GM12878 (cell line): ENCODE measurements at regions of chr9 and their contacts with region 1.

Region 1: GRCh38 chr9:123742009-123742767 is 187.7 kb downstream of the DENND1A start:
- DNase-seq: no peak
- ATAC-seq: no peak
- H3K4me3 ChIP-seq: no peak overlapping the region
- H3K27ac ChIP-seq: no peak overlapping the region
- H3K4me1 ChIP-seq: peaks cover 4% of the 10 kb centered on the region; the same call in 1 of the 2 replicates
- H3K27me3 ChIP-seq: no peaks in the 10 kb centered on the region
- CTCF ChIP-seq: no peak
- EP300 ChIP-seq: no peak
- POLR2A ChIP-seq: no peak
- RAD21 ChIP-seq: no peak

Region 2: DNA sequence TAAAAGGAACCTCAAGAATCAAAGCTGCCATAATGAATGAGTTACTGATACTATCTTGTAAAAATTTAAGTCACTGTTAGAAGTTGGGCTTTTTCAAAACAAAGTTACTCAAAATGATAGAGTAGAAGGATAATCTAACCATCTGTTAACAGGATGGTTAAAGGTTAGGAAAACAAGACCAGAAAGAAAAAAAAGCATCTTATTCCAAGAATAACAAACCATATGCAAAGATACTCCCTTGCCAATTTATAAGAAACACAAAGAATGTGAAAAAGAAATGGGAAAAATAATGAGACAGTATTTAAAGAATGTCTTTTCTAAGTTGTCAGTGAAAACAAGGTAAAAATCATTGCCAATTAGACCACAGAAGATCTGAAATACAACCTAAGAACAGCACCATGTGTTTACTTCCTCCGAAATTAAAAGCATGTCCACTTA is 525.0 kb before region 1 on chr9:
- CTCF ChIA-PET with region 1: no interaction called
- POLR2A ChIA-PET with region 1: no interaction called
- RAD21 ChIA-PET with region 1: no interaction called
- SMC1A ChIA-PET with region 1: no interaction called
- in situ Hi-C with region 1: no loop called
- intact Hi-C with region 1: no loop called
- DNase-seq: no peak
- ATAC-seq: no peak
- H3K4me3 ChIP-seq: no peak overlapping the region
- H3K27ac ChIP-seq: no peak overlapping the region; the same call in 1 of the 2 replicates
- H3K4me1 ChIP-seq: peaks cover 10% of the 10 kb centered on the region; the same call in 1 of the 2 replicates
- H3K27me3 ChIP-seq: no peaks in the 10 kb centered on the region
- CTCF ChIP-seq: no peak
- EP300 ChIP-seq: no peak
- POLR2A ChIP-seq: no peak
- RAD21 ChIP-seq: no peak

Region 3: GRCh38 chr9:123724211-123724796 is 17.9 kb before region 1 on chr9:
- CTCF ChIA-PET with region 1: interaction called, 6 read pairs
- POLR2A ChIA-PET with region 1: interaction called, 6 read pairs
- RAD21 ChIA-PET with region 1: interaction called, 3 read pairs
- SMC1A ChIA-PET with region 1: interaction called, 36 read pairs
- in situ Hi-C with region 1: no loop called
- intact Hi-C with region 1: no loop called
- DNase-seq: no peak
- ATAC-seq: no peak; the same call in 2 of the 3 replicates
- H3K4me3 ChIP-seq: no peak overlapping the region
- H3K27ac ChIP-seq: no peak overlapping the region
- H3K4me1 ChIP-seq: no peaks in the 10 kb centered on the region
- H3K27me3 ChIP-seq: no peaks in the 10 kb centered on the region
- CTCF ChIP-seq: peak in 1 of 3 experiments; percentile 20; a peak in 2 of 6 replicates
- EP300 ChIP-seq: no peak
- POLR2A ChIP-seq: no peak
- RAD21 ChIP-seq: peak; percentile 49; the same call in 1 of the 2 replicates

Region 4: GRCh38 chr9:123757547-123757946 is 15.4 kb after region 1 on chr9:
- CTCF ChIA-PET with region 1: interaction called, 3 read pairs
- POLR2A ChIA-PET with region 1: interaction called, 4 read pairs
- RAD21 ChIA-PET with region 1: interaction called, 4 read pairs
- SMC1A ChIA-PET with region 1: interaction called, 92 read pairs
- in situ Hi-C with region 1: no loop called
- intact Hi-C with region 1: no loop called
- DNase-seq: no peak
- ATAC-seq: no peak
- H3K4me3 ChIP-seq: no peak overlapping the region
- H3K27ac ChIP-seq: no peak overlapping the region
- H3K4me1 ChIP-seq: peaks cover 17% of the 10 kb centered on the region
- H3K27me3 ChIP-seq: no peaks in the 10 kb centered on the region
- CTCF ChIP-seq: no peak
- EP300 ChIP-seq: no peak
- POLR2A ChIP-seq: no peak
- RAD21 ChIP-seq: no peak

Region 5: DNA sequence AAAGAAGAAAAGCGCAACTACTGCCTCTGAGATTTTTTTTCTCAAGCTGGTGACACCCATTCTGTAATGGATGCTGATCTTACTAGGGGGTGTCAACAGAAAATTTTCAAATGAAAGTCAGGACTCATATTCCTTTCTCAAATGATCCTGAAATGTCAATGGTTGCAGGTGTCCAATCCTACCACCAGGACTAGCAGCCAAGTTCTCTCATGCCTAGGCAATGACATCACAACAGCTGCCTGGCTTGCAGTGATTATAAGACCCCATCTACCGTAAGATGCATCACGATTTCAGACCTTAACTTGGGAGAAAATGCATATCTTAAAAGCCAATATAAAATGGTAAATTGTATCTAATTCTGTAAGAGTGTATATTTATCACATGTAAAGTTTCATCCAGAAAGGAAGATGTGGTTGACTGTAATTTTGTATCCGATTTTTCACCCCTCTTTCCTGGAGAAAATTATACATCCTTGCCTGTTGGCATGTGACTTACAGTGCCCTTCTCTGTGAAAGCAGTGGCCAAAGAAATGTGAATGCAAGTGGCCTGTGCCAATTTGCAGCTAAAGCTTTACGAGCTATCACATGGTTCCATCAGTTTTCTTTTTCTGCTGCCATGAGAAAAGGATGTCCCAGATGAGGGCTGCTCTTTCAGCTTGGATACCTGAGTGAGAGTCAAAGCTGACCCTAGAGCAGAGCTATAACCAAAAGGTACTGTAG is 83.3 kb after region 1 on chr9:
- CTCF ChIA-PET with region 1: no interaction called
- POLR2A ChIA-PET with region 1: no interaction called
- RAD21 ChIA-PET with region 1: no interaction called
- SMC1A ChIA-PET with region 1: no interaction called
- in situ Hi-C with region 1: no loop called
- intact Hi-C with region 1: no loop called
- DNase-seq: no peak
- ATAC-seq: no peak
- H3K4me3 ChIP-seq: no peak overlapping the region
- H3K27ac ChIP-seq: no peak overlapping the region
- H3K4me1 ChIP-seq: no peaks in the 10 kb centered on the region
- H3K27me3 ChIP-seq: no peaks in the 10 kb centered on the region
- CTCF ChIP-seq: no peak
- EP300 ChIP-seq: no peak
- POLR2A ChIP-seq: no peak
- RAD21 ChIP-seq: no peak